AG04450 (cell line): ENCODE measurements at regions of chr2 and their contacts with region 1.

Region 1: DNA sequence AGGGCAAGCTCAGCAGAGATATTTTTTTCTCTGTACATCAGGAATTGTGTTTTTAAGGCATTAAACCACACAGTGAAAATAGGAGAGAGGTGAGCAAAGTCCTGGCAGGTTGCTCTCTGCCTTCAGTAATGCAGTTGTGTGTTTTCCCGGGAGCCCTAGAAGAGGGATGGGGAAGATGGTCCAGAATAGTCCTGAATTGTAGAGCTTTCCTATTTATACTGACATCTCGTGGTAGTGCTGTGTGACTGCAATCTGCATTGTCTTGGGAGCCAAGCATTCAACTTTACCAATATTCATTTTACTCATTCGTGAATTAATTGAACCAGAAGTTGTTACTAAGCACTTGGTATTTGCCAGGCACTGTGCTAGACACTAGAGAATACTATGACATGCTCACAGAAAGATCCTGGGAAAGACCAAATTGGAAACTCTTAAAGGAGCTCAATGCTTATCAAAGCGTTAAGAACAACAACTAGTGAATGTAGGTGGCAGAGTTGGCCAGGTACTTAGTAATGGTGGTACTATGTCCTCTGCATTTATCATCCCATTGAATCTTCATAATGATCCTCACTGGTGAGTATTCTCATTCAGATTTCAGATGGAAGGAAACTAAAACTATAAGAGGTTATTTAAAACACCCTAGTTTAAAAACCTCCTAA is 214.6 kb downstream of the TRIB2 start:
- DNase-seq: peak; percentile 30
- H3K4me3 ChIP-seq: no peak overlapping the region
- H3K27ac ChIP-seq: no peak overlapping the region
- H3K27me3 ChIP-seq: no peaks in the 10 kb centered on the region
- CTCF ChIP-seq: peak; percentile 94

Region 2: DNA sequence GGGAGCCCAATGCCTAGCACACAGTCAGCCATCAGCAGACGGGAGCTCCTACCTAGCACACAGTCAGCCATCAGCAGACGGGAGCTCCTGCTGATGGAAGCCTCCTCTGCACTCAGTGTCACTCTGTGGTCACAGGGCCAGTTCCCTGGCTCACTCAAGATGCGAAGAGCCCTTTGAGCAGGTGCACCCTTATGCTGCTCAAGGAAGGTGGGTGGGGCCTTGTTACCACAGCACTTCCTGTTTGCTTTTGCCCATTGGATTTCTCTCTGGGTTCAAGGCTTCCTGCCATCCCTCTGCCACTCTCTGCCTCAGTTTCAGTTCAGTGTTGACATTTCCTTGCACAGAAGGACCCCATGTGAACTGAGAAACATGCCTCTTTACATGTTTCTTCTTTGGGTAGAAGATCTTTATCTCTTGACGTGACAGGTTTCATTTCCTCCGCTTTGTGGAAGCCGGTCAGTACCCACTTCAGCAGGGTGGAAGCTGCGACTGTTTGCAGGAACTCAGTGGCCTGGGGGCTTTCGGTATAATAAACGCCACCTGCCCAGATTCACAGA is 203.0 kb before region 1 on chr2:
- CTCF ChIA-PET with region 1: interaction called, 14 read pairs
- POLR2A ChIA-PET with region 1: no interaction called
- DNase-seq: no peak
- H3K4me3 ChIP-seq: no peak overlapping the region
- H3K27ac ChIP-seq: no peak overlapping the region
- H3K27me3 ChIP-seq: no peaks in the 10 kb centered on the region
- CTCF ChIP-seq: no peak

Region 3: GRCh38 chr2:12824351-12824777 is 107.0 kb before region 1 on chr2:
- CTCF ChIA-PET with region 1: interaction called, 11 read pairs
- POLR2A ChIA-PET with region 1: no interaction called
- DNase-seq: no peak
- H3K4me3 ChIP-seq: no peak overlapping the region
- H3K27ac ChIP-seq: peak overlapping the region; percentile 24
- H3K27me3 ChIP-seq: no peaks in the 10 kb centered on the region
- CTCF ChIP-seq: no peak

Region 4: DNA sequence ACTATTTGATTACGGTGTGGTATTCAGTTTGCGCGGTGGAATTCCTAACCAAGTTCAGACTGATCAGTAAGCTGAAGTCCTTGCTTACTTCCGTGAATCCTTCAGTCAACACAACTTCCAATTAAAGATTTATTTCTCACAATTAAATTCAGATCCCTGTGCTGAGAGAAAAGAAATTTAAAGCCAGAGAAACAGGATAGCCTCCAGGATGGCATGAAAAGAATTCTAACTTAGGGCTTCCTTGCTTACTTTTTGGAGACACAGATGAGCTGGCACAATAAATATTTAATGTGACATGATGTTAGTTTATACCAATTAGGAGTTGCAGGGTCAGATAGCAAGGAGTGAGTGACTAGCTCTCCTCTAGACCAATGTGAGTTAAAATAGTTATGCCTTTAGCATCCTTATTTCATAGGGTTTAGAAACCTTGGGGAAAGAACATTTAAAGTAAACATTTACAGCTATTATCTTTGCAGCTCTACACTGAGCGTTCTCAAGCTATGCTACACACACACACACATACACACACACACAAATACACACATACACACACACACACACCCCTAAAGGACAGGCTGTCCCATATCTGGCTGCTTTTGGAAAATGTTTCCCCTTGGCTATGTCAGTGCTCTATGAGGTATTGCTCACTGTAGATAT is 63.6 kb before region 1 on chr2:
- CTCF ChIA-PET with region 1: interaction called, 13 read pairs
- POLR2A ChIA-PET with region 1: no interaction called
- DNase-seq: no peak
- H3K4me3 ChIP-seq: no peak overlapping the region
- H3K27ac ChIP-seq: no peak overlapping the region
- H3K27me3 ChIP-seq: no peaks in the 10 kb centered on the region
- CTCF ChIP-seq: no peak

Region 5: DNA sequence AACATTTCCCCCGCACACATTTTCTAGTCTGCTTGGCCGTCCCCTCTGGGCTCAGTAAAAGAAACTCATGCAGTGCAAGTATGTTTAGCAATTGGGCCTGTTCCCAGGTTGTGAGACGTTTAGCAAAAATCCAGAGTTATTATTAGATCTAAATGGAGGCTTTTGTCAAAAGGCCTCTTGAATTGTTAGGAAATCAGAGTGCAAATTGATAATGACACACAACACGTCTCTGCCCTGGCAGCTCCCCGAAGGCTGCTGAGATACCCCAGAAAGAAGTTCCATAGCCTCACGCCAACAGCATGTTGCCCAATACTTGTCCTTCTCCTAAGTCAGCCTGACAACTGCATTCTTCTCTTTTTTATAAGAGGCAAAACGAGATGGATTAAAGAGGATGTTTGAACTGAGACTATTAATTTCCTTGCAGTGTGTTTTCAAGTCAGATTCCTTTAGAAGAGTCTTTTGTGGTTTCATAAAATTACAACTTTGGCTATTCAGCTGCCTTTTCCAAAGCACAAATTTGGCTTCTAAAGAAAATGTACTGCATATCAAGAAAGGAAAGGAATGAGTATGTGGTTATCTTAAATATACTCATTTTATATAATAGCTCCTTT is 12.4 kb before region 1 on chr2:
- CTCF ChIA-PET with region 1: interaction called, 23 read pairs
- POLR2A ChIA-PET with region 1: no interaction called
- DNase-seq: peak; percentile 53
- H3K4me3 ChIP-seq: no peak overlapping the region
- H3K27ac ChIP-seq: peak overlapping the region; percentile 72
- H3K27me3 ChIP-seq: no peaks in the 10 kb centered on the region
- CTCF ChIP-seq: no peak

Region 6: GRCh38 chr2:12948961-12949353 is 17.6 kb after region 1 on chr2:
- CTCF ChIA-PET with region 1: interaction called, 14 read pairs
- POLR2A ChIA-PET with region 1: no interaction called
- DNase-seq: no peak
- H3K4me3 ChIP-seq: no peak overlapping the region
- H3K27ac ChIP-seq: no peak overlapping the region
- H3K27me3 ChIP-seq: no peaks in the 10 kb centered on the region
- CTCF ChIP-seq: no peak

Region 7: GRCh38 chr2:13091455-13091854 is 160.1 kb after region 1 on chr2:
- CTCF ChIA-PET with region 1: no interaction called
- POLR2A ChIA-PET with region 1: no interaction called
- DNase-seq: no peak
- H3K4me3 ChIP-seq: no peak overlapping the region
- H3K27ac ChIP-seq: no peak overlapping the region
- H3K27me3 ChIP-seq: no peaks in the 10 kb centered on the region
- CTCF ChIP-seq: no peak